Panc1 (cell line): ENCODE measurements at regions of chr11 and their contacts with region 1.

Region 1: GRCh38 chr11:18171377-18172000 is 1.1 kb upstream of the MRGPRX4 start:
- DNase-seq: peak; percentile 15
- ATAC-seq: peak; percentile 84; the same call in 1 of the 2 replicates
- H3K4me3 ChIP-seq: no peak overlapping the region
- H3K27ac ChIP-seq: no peak overlapping the region
- H3K4me1 ChIP-seq: no peaks in the 10 kb centered on the region
- H3K27me3 ChIP-seq: peaks cover 25% of the 10 kb centered on the region
- CTCF ChIP-seq: peak; percentile 74

Region 2: GRCh38 chr11:17473071-17473744 is 698.3 kb before region 1 on chr11:
- CTCF ChIA-PET with region 1: no interaction called
- POLR2A ChIA-PET with region 1: no interaction called
- in situ Hi-C with region 1: no loop called
- intact Hi-C with region 1: no loop called
- DNase-seq: no peak
- ATAC-seq: peak; percentile 79
- H3K4me3 ChIP-seq: no peak overlapping the region
- H3K27ac ChIP-seq: no peak overlapping the region
- H3K4me1 ChIP-seq: no peaks in the 10 kb centered on the region
- H3K27me3 ChIP-seq: peaks cover 13% of the 10 kb centered on the region
- CTCF ChIP-seq: peak; percentile 44; the same call in 1 of the 2 replicates

Region 3: DNA sequence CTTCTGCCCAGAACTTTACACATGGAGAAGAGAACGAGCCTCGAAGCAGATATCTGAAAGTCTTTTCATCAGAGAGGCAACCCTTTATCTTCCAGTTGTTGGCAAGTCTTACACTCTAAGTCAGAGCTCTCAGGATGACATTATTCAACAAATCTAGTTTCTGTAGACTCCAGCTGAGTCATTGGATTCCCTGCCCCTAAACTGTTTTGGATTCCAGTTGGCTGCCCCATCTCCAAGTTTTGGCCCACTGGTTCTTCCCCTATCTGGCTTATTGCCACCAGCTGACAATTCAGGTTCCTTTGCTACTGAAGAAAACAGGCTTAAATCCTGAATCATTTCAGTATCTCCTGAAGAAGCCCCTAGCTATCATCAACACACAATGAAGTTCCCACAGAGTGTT is 79.8 kb before region 1 on chr11:
- CTCF ChIA-PET with region 1: no interaction called
- POLR2A ChIA-PET with region 1: no interaction called
- in situ Hi-C with region 1: no loop called
- intact Hi-C with region 1: no loop called
- DNase-seq: no peak
- ATAC-seq: no peak
- H3K4me3 ChIP-seq: no peak overlapping the region
- H3K27ac ChIP-seq: no peak overlapping the region
- H3K4me1 ChIP-seq: no peaks in the 10 kb centered on the region
- H3K27me3 ChIP-seq: no peaks in the 10 kb centered on the region
- CTCF ChIP-seq: no peak

Region 4: GRCh38 chr11:18203723-18204122 is 32.2 kb after region 1 on chr11:
- CTCF ChIA-PET with region 1: interaction called, 13 read pairs
- POLR2A ChIA-PET with region 1: no interaction called
- in situ Hi-C with region 1: no loop called
- intact Hi-C with region 1: no loop called
- DNase-seq: no peak
- ATAC-seq: peak; percentile 88
- H3K4me3 ChIP-seq: no peak overlapping the region
- H3K27ac ChIP-seq: no peak overlapping the region
- H3K4me1 ChIP-seq: no peaks in the 10 kb centered on the region
- H3K27me3 ChIP-seq: no peaks in the 10 kb centered on the region; the same call in 1 of the 2 replicates
- CTCF ChIP-seq: peak; percentile 72